ENCODE measurements at regions of chr19 and their contacts with region 1.

Region 1: GRCh38 chr19:28324275-28325060 is 888.5 kb downstream of the UQCRFS1 start:
- DNase-seq: no peak
- H3K4me3 ChIP-seq: no peak overlapping the region
- H3K27ac ChIP-seq: no peak overlapping the region
- H3K4me1 ChIP-seq: no peaks in the 10 kb centered on the region
- H3K27me3 ChIP-seq: no peaks in the 10 kb centered on the region
- CTCF ChIP-seq: no peak
- POLR2A ChIP-seq: no peak

Region 2: DNA sequence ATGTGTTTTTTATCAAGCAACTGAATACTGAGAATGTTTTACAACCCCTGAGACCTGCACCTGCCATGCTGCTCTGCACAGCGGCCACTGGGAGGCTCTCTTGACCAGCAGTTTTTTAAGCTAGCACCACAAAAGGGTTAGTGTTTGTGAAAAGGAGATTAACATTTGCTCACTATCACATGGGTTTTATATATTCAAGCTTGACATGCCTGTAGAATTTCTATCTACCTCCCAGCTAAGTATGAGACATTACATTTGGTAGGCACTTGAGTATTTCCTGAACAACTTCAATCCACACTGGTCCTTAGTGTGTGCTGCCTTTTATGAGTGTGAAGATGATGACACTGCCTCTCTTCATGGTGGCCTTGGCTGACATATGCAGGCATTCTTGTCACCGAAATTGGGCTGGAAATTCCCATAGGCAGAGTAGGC is 350.4 kb before region 1 on chr19:
- intact Hi-C with region 1: loop called (anchors 10 kb)
- DNase-seq: no peak
- H3K4me3 ChIP-seq: no peak overlapping the region
- H3K27ac ChIP-seq: no peak overlapping the region
- H3K4me1 ChIP-seq: no peaks in the 10 kb centered on the region
- H3K27me3 ChIP-seq: no peaks in the 10 kb centered on the region
- CTCF ChIP-seq: peak; percentile 33 to 57 (median 49)
- POLR2A ChIP-seq: no peak